Activated CD4-positive, alpha-beta T cell treated with anti-CD3 and anti-CD28 coated beads for 36 hours (primary cell): ENCODE measurements at regions of chr10 and their contacts with region 1.

Region 1: DNA sequence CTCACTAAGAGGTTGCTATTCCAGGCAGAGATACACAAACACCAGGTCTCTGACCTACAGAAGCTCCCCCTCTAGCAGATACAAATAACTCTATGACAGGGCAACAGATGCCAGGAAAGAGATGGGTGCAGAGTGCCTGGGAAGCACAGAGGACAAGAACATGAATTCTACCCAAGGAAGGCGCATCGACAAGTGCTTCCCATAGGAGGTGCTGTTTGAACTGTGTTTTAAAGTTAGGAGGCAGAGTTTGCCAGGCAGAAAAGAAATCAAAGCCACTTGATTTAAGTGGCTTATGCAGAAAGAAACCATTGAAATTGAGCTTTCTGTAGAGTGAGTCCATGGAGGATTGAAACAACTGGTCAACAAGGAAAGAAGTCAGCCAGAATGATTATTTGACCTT is 35.3 kb upstream of the EGR2 start:
- DNase-seq: peak; percentile 51
- ATAC-seq: no peak
- H3K4me3 Mint-ChIP-seq: no peak overlapping the region
- H3K27ac Mint-ChIP-seq: no peak overlapping the region
- H3K4me1 Mint-ChIP-seq: peaks cover 47% of the 10 kb centered on the region
- H3K27me3 Mint-ChIP-seq: peaks cover 20% of the 10 kb centered on the region

Region 2: DNA sequence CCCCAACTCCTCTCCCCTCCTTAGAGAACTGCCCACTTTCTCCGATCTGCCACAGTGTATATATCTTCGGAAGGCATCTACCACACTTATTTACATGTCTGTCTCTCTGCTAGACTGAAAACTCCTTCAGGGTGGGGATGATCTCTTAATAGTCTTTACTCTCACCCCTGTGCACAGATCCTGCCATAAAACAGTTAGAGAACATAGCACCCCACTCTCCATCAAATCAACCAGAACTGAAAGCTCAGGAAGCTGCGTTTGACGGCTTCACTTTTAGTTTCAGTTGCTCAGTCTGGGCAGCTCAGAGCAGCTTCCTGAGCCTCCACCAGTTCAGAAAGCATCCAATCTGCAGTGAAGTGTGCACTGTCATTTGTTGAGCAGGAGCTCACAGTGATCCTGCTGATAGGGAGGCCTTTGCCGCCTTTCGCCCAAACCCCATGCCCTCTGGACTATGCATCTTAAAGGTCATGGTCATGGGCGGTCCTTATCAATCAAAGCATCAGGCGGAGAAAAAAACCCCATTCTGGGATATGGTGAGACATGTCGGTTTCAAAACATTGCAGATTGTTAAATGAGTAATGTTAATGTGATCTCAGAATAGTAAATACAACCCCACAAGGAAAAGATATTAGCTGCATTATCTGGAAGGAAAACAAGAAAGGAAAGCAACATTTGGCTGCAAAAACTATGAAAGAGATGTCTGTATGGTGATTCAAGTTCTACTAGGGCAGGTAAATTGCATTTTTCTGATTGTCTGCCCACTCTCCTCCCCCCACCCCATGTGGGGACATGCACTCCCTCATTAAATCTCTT is 214.0 kb before region 1 on chr10:
- CTCF ChIA-PET with region 1: no interaction called
- POLR2A ChIA-PET with region 1: no interaction called
- intact Hi-C with region 1: loop called in 1 of 2 experiments (anchors 2 kb)
- DNase-seq: peak; percentile 82
- ATAC-seq: peak; percentile 95
- H3K4me3 Mint-ChIP-seq: no peak overlapping the region
- H3K27ac Mint-ChIP-seq: no peak overlapping the region
- H3K4me1 Mint-ChIP-seq: peaks cover 21% of the 10 kb centered on the region
- H3K27me3 Mint-ChIP-seq: no peaks in the 10 kb centered on the region

Region 3: DNA sequence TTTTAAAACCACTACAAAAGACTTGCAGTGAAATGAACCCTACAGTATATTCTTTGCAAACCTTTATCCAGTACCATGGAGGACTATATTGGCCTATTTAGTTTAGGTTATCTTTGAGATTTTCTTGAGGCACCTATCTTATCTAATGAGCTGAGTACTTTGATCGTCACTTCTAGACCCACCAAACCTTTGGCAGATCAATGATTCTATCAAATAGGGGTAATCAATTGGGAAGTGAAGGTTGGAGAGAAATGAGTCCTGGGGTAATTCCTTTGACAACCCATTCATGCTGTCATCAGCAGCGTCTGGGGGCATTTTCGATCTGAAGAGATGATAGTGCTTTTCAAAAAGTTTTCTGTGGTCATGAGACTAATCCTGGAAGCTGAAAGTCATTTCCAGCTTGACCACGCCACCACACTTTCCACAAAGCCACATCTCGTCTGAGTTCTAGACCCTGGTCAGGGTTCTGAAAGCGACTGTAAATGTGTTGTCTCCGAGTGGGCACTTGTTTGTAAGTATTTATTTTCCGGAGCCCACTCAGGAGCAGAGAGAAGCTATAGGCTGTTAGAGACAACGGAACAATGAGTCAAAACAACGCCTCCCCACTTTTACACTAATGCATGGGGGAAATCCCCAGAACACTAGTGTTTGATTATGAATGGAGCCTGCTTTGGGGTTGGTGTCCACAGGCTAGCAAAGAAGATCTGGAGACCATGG is 40.1 kb before region 1 on chr10:
- CTCF ChIA-PET with region 1: interaction called, 5 read pairs
- POLR2A ChIA-PET with region 1: interaction called, 6 read pairs
- intact Hi-C with region 1: loop called (anchors 1 kb)
- DNase-seq: peak; percentile 93
- ATAC-seq: peak; percentile 48
- H3K4me3 Mint-ChIP-seq: peak overlapping the region; percentile 99
- H3K27ac Mint-ChIP-seq: peak overlapping the region; percentile 87
- H3K4me1 Mint-ChIP-seq: peaks cover 75% of the 10 kb centered on the region
- H3K27me3 Mint-ChIP-seq: no peaks in the 10 kb centered on the region

Region 4: DNA sequence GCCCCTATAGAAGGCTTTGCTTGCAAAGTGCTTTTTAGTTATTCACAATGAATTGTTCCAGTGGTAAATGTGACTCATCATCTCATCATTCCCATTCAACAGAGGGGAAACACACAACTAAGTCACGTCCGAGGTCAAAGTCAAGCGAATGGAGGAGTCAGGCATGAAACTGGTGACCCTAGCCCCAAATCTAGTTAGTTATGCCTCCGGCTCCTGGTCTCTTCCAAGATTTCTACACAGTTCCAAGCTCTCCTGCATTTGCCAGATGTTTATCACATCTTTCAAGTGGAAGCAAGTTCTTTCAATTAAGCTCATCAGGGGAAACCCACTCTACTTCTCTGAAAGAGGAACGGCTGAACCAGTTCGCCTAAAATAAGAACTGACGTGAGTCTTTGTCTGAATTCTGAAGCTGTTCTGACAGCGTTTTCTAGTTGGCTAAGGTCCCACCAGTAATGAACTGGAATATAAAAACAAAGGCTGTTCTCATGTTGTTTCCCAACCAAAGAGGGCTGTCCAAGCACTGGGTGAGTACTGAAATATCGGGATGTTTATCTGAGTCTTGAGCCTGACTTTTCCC is 140.8 kb after region 1 on chr10:
- CTCF ChIA-PET with region 1: interaction called, 4 read pairs
- POLR2A ChIA-PET with region 1: interaction called, 3 read pairs
- intact Hi-C with region 1: loop called (anchors 1 kb)
- DNase-seq: peak; percentile 28
- ATAC-seq: peak; percentile 19
- H3K4me3 Mint-ChIP-seq: peak overlapping the region; percentile 26
- H3K27ac Mint-ChIP-seq: peak overlapping the region; percentile 82
- H3K4me1 Mint-ChIP-seq: peaks cover 63% of the 10 kb centered on the region
- H3K27me3 Mint-ChIP-seq: peaks cover 3% of the 10 kb centered on the region

Region 5: GRCh38 chr10:63133056-63133820 is 281.8 kb after region 1 on chr10 and contains the start of gene NRBF2:
- CTCF ChIA-PET with region 1: no interaction called
- POLR2A ChIA-PET with region 1: no interaction called
- intact Hi-C with region 1: loop called in 1 of 2 experiments (anchors 2 kb)
- DNase-seq: peak; percentile 99
- ATAC-seq: peak; percentile 90
- H3K4me3 Mint-ChIP-seq: peak within 1 kb of the TSS; percentile 81
- H3K27ac Mint-ChIP-seq: peak within 1 kb of the TSS; percentile 92
- H3K4me1 Mint-ChIP-seq: peaks cover 46% of the 10 kb centered on the region
- H3K27me3 Mint-ChIP-seq: no peaks in the 10 kb centered on the region
- total RNA-seq, gene NRBF2: 23.9 to 24.1 TPM